ENCODE measurements at regions of chr3 and their contacts with region 1.

Region 1: GRCh38 chr3:86708908-86709307 is 282.0 kb downstream of the VGLL3 start:
- DNase-seq: no peak
- ATAC-seq: no peak
- H3K4me3 ChIP-seq: no peak overlapping the region
- H3K4me3 Mint-ChIP-seq: no peak overlapping the region
- H3K27ac ChIP-seq: no peak overlapping the region
- H3K27ac Mint-ChIP-seq: no peak overlapping the region
- H3K4me1 ChIP-seq: no peaks in the 10 kb centered on the region
- H3K4me1 Mint-ChIP-seq: no peaks in the 10 kb centered on the region
- H3K27me3 ChIP-seq: no peaks in the 10 kb centered on the region
- H3K27me3 Mint-ChIP-seq: no peaks in the 10 kb centered on the region

Region 2: DNA sequence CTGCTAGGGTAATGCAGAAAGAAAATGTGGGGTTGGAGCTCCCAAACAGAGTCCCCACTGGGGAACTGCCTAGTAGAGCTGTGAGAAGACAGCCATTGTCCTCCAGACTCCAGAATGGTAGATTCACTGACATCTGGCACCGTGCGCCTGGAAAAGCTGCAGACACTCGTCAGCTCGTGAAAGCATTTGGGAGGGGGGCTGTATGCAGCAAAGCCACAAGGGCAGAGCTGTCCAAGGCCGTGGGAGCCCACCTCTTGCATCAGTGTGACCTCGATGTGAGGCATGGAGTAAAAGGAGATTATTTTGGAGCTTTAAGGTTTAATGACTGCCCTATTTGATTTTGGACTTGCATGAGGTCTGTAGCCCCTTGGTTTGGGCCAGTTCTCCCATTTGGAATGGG is 39.1 kb after region 1 on chr3:
- CTCF ChIA-PET with region 1: no interaction called
- POLR2A ChIA-PET with region 1: interaction called, 4 to 10 read pairs
- DNase-seq: no peak
- ATAC-seq: no peak
- H3K4me3 ChIP-seq: no peak overlapping the region
- H3K4me3 Mint-ChIP-seq: no peak overlapping the region
- H3K27ac ChIP-seq: no peak overlapping the region
- H3K27ac Mint-ChIP-seq: no peak overlapping the region
- H3K4me1 ChIP-seq: no peaks in the 10 kb centered on the region
- H3K4me1 Mint-ChIP-seq: no peaks in the 10 kb centered on the region
- H3K27me3 ChIP-seq: no peaks in the 10 kb centered on the region
- H3K27me3 Mint-ChIP-seq: no peaks in the 10 kb centered on the region